Transverse colon (tissue), 4 donors: ENCODE measurements at regions of chr3 and their contacts with region 1.

Region 1: GRCh38 chr3:137105277-137105977 is 147.6 kb downstream of the IL20RB start:
- DNase-seq: no peak
- H3K4me3 ChIP-seq: no peak overlapping the region
- H3K27ac ChIP-seq: no peak overlapping the region
- H3K4me1 ChIP-seq: no peaks in the 10 kb centered on the region
- H3K27me3 ChIP-seq: peaks cover 24% of the 10 kb centered on the region
- CTCF ChIP-seq: peak; percentile 52 to 68 (median 60)
- EP300 ChIP-seq: no peak
- POLR2A ChIP-seq: no peak

Region 2: DNA sequence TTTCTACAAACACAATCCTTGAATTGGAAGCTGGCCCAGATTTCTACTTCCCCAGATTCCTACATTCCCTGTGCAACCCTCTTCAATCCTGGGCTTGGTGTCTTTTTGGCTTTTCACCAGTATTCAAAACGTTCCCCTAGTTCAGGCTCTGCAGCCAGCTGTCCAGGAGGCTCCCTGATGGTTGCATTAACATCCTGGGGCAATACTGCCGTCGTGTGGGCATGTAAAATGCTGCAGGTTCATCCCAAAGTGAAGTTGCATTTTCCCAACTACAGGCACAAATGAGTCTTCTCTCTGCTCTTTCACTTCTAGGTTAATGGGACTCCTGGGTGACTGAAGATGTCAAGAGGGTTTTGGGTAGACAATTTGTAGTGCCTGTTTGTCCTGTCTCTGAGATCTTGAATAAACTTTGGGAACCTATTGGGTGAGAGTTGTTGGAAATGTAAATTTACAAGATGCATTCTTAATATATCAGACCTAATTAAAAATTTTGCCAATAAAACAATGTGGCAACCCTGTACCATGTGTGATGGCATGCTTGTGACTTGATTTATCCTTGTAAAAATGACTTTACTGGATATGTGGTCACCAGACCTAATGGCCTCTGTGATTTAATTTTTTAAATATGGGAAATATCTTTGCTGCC is 687.3 kb after region 1 on chr3:
- in situ Hi-C with region 1: loop called in 1 of 4 experiments (anchors 25 kb)
- intact Hi-C with region 1: no loop called
- DNase-seq: no peak
- H3K4me3 ChIP-seq: no peak overlapping the region
- H3K27ac ChIP-seq: no peak overlapping the region
- H3K4me1 ChIP-seq: no peaks in the 10 kb centered on the region
- H3K27me3 ChIP-seq: no peaks in the 10 kb centered on the region
- CTCF ChIP-seq: peak in 4 of 5 experiments; percentile 16 to 59 (median 38)
- EP300 ChIP-seq: no peak
- POLR2A ChIP-seq: no peak

Region 3: DNA sequence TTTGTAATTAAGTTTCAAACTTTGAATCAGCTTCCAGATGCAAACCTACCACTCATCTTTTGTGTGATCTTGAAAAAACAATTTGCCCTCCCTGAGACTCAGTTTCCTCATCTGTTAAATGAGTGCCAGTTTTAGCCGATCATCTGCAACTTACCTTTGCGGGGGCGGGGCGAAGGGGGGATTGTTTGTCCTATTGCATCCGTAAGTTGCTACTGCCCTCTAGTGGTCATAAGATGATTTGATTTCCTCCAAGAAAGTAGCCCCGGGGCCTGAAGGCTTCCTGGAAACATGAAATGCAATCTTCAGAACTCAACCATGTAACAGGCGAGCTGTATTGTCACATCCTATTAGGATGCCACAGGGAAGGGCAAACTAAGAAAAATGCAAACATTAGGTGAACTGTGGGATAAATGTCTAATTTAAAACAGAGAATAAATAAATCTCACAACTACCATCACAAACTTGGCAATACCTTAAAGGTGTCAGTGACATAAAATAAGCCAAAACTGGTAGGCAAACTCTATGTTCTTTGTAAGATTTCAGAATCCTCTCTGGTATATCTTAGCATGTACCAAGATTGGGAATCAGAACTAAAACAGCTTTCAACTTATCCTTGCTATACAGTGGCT is 841.0 kb after region 1 on chr3:
- in situ Hi-C with region 1: loop called (anchors 25 kb)
- intact Hi-C with region 1: loop called (anchors 10 kb)
- DNase-seq: peak; percentile 27
- H3K4me3 ChIP-seq: no peak overlapping the region
- H3K27ac ChIP-seq: no peak overlapping the region
- H3K4me1 ChIP-seq: no peaks in the 10 kb centered on the region
- H3K27me3 ChIP-seq: no peaks in the 10 kb centered on the region
- CTCF ChIP-seq: peak; percentile 48 to 68 (median 61)
- EP300 ChIP-seq: no peak
- POLR2A ChIP-seq: no peak